Activated T-helper 2 cell treated with anti-CD3 and anti-CD28 coated beads, Interferon-gamma antibody, Interleukin-2, Interleukin-4, amounts not matched to agents 10 μg/mL and 5 μg/mL and 100 μg/mL, durations not matched to agents 14 hours and 24 hours and 36 hours (primary cell): ENCODE measurements at regions of chr16 and their contacts with region 1.

Region 1: GRCh38 chr16:22001591-22001990 is 675 bp upstream of the PDZD9 start:
- DNase-seq: no peak
- H3K4me3 Mint-ChIP-seq: no peak overlapping the region
- H3K27ac Mint-ChIP-seq: no peak overlapping the region
- H3K4me1 Mint-ChIP-seq: peaks cover 11% of the 10 kb centered on the region
- H3K27me3 Mint-ChIP-seq: peaks cover 7% of the 10 kb centered on the region

Region 2: GRCh38 chr16:22077700-22078313 is 76.2 kb after region 1 on chr16:
- intact Hi-C with region 1: loop called (anchors 1 kb)
- DNase-seq: peak; percentile 53
- H3K4me3 Mint-ChIP-seq: no peak overlapping the region
- H3K27ac Mint-ChIP-seq: no peak overlapping the region
- H3K4me1 Mint-ChIP-seq: peaks cover 3% of the 10 kb centered on the region
- H3K27me3 Mint-ChIP-seq: no peaks in the 10 kb centered on the region

Region 3: DNA sequence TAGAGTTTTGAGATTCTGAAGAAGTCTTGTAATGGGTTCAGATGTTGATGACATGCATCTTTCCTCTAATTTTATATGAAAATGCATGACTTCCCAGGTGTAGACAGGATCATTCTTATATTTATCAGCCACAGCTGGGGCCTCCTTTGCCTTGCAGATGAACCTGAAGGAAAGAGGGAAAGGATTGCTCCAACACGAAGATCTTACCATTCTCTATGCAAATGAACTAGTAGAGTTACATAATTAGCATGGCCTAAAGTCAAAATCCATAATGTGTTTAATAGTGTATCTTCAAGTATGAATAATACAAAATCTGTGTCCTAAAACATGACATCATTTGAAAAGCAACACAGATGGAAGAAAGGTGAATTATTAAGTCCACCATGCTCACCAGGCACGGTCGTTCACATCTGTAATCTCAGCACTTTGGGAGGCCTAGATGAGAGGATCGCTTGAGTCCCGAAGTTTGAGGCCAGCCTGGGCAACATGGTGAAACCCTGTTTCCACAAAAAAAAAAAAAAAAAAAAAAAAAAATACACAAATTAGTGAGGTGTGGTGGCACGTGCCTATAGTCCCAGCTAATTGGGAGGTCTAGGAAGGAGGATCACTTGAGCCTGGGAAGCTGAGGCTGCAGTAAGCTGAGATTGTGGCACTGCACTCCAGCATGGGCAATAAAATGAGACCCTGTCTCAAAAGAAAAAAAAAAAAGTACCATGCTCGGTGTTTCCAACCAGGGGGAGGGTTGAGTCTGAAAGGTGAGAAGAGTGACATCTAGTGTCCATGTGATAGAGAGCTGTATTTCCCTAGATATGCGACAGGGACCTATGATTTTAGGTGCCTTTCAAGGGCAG is 97.0 kb after region 1 on chr16:
- intact Hi-C with region 1: loop called (anchors 1 kb)
- DNase-seq: no peak
- H3K4me3 Mint-ChIP-seq: no peak overlapping the region
- H3K27ac Mint-ChIP-seq: no peak overlapping the region
- H3K4me1 Mint-ChIP-seq: peaks cover 1% of the 10 kb centered on the region
- H3K27me3 Mint-ChIP-seq: peaks cover 25% of the 10 kb centered on the region

Region 4: DNA sequence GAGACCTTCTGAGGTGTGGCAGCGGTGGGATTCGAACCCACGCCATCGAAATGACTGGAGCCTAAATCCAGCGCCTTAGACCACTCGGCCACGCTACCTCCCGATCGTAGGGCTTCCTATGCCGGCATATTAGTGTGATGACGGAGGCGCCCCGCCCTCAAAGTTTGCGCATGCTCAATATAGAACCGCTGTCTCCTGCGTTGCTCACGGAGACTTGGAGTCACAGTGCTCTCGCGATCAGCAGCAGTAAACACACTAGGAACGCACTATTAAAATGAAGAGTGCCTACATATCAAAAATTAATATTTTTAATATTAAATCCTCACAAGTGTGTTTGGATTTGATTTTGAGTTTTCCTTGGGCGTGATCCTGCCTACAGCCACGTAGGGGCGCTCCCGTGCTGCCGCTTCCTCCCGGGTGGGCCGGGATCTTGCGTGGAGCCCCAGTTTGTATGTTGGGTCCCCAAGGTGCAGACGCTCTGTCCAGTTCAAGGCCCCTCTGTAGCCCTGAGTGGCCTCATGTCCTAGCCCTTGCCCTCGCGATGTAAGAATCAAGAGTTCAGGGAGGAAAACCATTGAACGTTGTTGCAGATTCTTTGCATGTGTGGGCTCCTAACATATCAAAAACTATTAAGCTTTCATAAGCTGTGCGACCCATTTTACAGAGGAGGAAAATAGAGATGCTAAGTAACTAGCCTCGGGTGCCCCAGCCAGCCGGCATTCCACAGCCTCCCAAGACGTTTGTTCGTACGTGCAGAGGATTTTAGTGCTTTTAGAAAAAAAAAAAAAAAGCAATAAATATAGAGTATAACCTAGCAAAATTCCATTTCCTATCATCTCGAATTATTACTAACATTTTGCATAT is 194.3 kb after region 1 on chr16:
- intact Hi-C with region 1: no loop called
- DNase-seq: peak; percentile 91
- H3K4me3 Mint-ChIP-seq: peak overlapping the region; percentile 78
- H3K27ac Mint-ChIP-seq: peak overlapping the region; percentile 79
- H3K4me1 Mint-ChIP-seq: peaks cover 48% of the 10 kb centered on the region
- H3K27me3 Mint-ChIP-seq: no peaks in the 10 kb centered on the region